ENCODE measurements at regions of chr18 and their contacts with region 1.

Region 1: DNA sequence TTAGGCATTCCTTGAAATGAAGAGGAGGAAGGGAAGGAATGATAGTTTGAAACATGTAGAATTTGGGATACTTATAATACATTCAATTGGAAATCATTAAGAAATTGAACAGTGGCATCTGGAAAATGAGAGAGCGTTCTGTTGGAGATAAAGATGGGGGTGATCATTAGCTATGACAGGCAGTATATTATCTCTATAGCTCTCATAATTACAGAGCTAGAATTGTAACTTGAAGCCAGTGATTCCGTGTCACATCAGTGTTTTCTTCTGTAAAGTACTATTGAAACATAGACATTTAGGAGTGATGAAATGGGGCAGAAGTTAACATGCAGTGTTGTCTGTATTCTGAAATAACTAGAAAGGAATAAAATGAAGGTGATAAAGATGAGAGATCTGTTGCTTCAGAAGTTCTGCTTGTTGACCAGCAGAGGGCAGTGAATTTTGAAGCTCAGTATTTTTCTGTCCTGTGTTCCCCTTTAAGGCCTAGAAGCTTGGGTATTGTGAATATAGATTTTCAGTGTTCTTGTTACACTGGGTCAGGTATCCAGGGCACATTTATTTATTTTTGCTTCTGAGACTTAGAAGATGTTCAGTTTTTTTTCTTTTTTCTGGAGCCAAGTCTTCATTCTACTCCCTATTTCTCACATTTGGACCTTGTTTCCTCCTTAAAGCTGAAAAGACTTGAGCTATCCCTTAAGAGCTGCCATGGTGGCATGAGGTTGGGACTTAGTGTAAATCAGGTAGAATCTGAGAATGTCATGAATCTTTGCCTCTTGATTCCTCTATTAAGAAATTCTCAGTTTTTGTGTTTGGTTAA is 157.4 kb downstream of the TAF4B start:
- DNase-seq: peak in 2 of 9 experiments; percentile 27 to 50
- ATAC-seq: peak; percentile 40
- H3K4me3 ChIP-seq: no peak overlapping the region
- H3K4me3 Mint-ChIP-seq: no peak overlapping the region
- H3K27ac ChIP-seq: no peak overlapping the region
- H3K27ac Mint-ChIP-seq: no peak overlapping the region
- H3K4me1 ChIP-seq: no peaks in the 10 kb centered on the region
- H3K4me1 Mint-ChIP-seq: peaks cover 2% of the 10 kb centered on the region
- H3K27me3 ChIP-seq: no peaks in the 10 kb centered on the region
- H3K27me3 Mint-ChIP-seq: no peaks in the 10 kb centered on the region
- CTCF ChIP-seq: peak; percentile 84

Region 2: DNA sequence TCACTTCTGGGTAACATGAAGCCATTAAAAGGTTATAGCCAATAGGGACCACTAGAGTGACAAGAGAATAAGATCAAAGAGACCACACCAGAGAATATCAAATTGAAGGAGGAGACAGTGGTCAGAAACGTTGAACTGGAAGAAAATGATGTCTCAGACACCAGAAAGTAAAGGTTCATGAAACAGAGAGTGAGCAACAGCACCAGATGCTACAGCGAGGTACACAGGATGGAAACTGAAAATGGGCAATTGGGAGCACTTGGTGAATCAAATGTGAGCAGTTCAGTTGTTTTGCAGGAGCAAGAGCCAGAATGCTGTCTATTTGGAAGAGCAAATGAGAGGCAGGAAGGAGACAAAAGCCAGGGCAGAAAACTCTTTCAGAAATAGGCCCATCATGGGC is 455.8 kb before region 1 on chr18:
- CTCF ChIA-PET with region 1: no interaction called
- POLR2A ChIA-PET with region 1: no interaction called
- intact Hi-C with region 1: no loop called
- DNase-seq: no peak
- ATAC-seq: no peak
- H3K4me3 ChIP-seq: no peak overlapping the region
- H3K4me3 Mint-ChIP-seq: no peak overlapping the region
- H3K27ac ChIP-seq: no peak overlapping the region
- H3K27ac Mint-ChIP-seq: no peak overlapping the region
- H3K4me1 ChIP-seq: no peaks in the 10 kb centered on the region
- H3K4me1 Mint-ChIP-seq: no peaks in the 10 kb centered on the region
- H3K27me3 ChIP-seq: no peaks in the 10 kb centered on the region
- H3K27me3 Mint-ChIP-seq: peaks cover 3% of the 10 kb centered on the region
- CTCF ChIP-seq: no peak

Region 3: GRCh38 chr18:26394047-26394654 is 10.5 kb after region 1 on chr18:
- CTCF ChIA-PET with region 1: interaction called, 17 read pairs
- POLR2A ChIA-PET with region 1: no interaction called
- intact Hi-C with region 1: no loop called
- DNase-seq: no peak
- ATAC-seq: no peak
- H3K4me3 ChIP-seq: no peak overlapping the region
- H3K4me3 Mint-ChIP-seq: no peak overlapping the region
- H3K27ac ChIP-seq: no peak overlapping the region
- H3K27ac Mint-ChIP-seq: no peak overlapping the region
- H3K4me1 ChIP-seq: no peaks in the 10 kb centered on the region
- H3K4me1 Mint-ChIP-seq: no peaks in the 10 kb centered on the region
- H3K27me3 ChIP-seq: no peaks in the 10 kb centered on the region
- H3K27me3 Mint-ChIP-seq: no peaks in the 10 kb centered on the region
- CTCF ChIP-seq: no peak

Region 4: GRCh38 chr18:26642440-26643348 is 259.0 kb after region 1 on chr18:
- CTCF ChIA-PET with region 1: no interaction called
- POLR2A ChIA-PET with region 1: no interaction called
- intact Hi-C with region 1: loop called (anchors 5 to 10 kb)
- DNase-seq: no peak
- ATAC-seq: no peak
- H3K4me3 ChIP-seq: no peak overlapping the region
- H3K4me3 Mint-ChIP-seq: no peak overlapping the region
- H3K27ac ChIP-seq: no peak overlapping the region
- H3K27ac Mint-ChIP-seq: no peak overlapping the region
- H3K4me1 ChIP-seq: no peaks in the 10 kb centered on the region
- H3K4me1 Mint-ChIP-seq: no peaks in the 10 kb centered on the region
- H3K27me3 ChIP-seq: peaks cover 0 to 2% of the 10 kb centered on the region in 2 experiments
- H3K27me3 Mint-ChIP-seq: peaks cover 9% of the 10 kb centered on the region
- CTCF ChIP-seq: no peak

Region 5: GRCh38 chr18:26648509-26649192 is 265.0 kb after region 1 on chr18:
- CTCF ChIA-PET with region 1: interaction called, 4 read pairs
- POLR2A ChIA-PET with region 1: no interaction called
- intact Hi-C with region 1: loop called (anchors 5 to 10 kb)
- DNase-seq: no peak
- ATAC-seq: no peak
- H3K4me3 ChIP-seq: no peak overlapping the region
- H3K4me3 Mint-ChIP-seq: no peak overlapping the region
- H3K27ac ChIP-seq: no peak overlapping the region
- H3K27ac Mint-ChIP-seq: no peak overlapping the region
- H3K4me1 ChIP-seq: no peaks in the 10 kb centered on the region
- H3K4me1 Mint-ChIP-seq: no peaks in the 10 kb centered on the region
- H3K27me3 ChIP-seq: peaks cover 6 to 7% of the 10 kb centered on the region in 2 experiments
- H3K27me3 Mint-ChIP-seq: peaks cover 39% of the 10 kb centered on the region
- CTCF ChIP-seq: no peak